AG04450 (cell line): ENCODE measurements at regions of chr16 and their contacts with region 1.

Region 1: DNA sequence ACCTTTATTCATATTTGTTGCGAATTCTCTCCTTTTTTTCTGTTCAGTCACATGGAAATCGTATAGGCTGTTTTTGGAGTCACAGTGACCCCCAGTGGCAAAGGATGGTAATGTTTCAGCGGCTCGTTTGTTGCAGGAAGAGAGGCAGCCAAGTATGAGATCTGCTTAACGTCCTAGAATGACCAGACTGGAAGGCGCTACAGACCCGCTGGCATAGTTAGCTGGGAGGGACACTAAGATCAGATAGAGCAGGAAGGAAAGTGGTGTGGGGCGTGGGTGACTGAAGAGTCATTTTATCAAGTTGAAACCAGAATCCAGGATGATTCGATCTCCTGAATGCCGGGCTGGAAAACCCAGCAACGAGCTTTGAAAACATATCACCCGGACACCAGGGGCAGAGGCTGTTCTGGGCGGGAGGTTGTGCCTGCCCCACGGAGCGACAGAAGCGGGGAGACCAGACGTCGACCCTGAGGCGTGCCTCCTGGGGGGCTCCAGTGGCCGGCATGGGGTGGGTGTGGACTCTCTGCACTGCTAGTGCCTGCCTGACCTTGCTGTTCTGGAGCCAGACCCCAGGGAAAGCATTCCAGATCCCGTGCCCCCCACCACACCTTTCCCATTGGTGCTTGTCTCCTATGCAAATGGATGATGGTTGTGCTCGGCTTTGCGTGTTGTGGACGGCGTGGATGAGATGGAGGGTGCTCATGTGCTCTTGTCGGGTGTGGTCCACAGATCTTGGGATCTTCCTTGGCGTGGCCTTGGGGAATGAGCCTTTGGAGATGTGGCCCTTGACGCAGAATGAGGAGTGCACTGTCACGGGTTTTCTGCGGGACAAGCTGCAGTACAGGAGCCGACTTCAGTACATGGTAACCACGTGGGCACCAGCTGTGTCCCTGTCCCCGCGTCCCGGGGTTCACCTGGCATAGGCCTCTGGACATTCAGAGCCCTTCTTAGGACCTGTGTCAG is 7.7 kb downstream of the IL34 start:
- DNase-seq: peak; percentile 54
- H3K4me3 ChIP-seq: peak overlapping the region; percentile 41
- H3K27ac ChIP-seq: no peak overlapping the region
- H3K27me3 ChIP-seq: no peaks in the 10 kb centered on the region
- CTCF ChIP-seq: peak; percentile 93

Region 2: DNA sequence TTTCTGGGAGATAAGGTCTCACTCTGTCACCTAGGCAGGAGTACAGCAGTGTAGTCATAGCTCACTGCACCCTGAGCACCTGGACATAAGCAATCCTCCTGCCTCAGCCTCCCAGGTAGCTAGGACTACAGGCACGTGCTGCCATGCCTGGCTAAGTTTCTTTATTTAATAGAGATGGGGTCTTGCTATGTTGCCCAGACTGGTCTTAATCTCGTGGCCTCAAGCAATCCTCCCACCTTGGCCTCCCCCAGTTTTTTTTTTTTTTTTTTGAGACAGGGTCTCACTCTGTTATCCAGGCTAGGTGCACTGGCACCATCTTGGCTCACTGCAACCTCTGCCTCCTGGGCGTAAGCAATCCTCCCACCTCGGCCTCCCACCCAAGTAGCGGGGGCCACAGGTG is 334.0 kb before region 1 on chr16:
- CTCF ChIA-PET with region 1: no interaction called
- POLR2A ChIA-PET with region 1: no interaction called
- DNase-seq: no peak
- H3K4me3 ChIP-seq: no peak overlapping the region
- H3K27ac ChIP-seq: no peak overlapping the region
- H3K27me3 ChIP-seq: no peaks in the 10 kb centered on the region
- CTCF ChIP-seq: no peak

Region 3: DNA sequence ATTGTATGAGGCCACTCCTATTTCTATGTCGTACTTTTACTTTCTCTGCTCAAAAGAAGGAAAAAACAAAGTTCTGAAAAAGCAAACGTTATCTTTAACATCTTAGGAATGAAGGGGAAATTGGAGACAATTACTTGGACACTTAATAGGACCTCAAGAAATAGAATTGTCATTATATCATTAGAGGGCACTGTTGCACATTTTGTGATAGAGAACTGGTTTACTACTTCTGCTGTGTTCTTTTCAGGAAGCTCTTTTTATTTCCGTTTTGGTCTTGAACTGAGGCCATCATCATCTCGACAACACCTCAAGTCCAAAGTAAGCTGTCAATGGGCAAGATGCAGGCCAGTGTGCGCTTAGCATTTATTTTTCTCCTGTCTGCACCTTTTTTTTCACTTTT is 145.3 kb before region 1 on chr16:
- CTCF ChIA-PET with region 1: interaction called, 10 read pairs
- POLR2A ChIA-PET with region 1: no interaction called
- DNase-seq: no peak
- H3K4me3 ChIP-seq: no peak overlapping the region
- H3K27ac ChIP-seq: no peak overlapping the region
- H3K27me3 ChIP-seq: no peaks in the 10 kb centered on the region
- CTCF ChIP-seq: no peak

Region 4: GRCh38 chr16:70534971-70535370 is 119.1 kb before region 1 on chr16:
- CTCF ChIA-PET with region 1: interaction called, 48 read pairs
- POLR2A ChIA-PET with region 1: no interaction called
- DNase-seq: no peak
- H3K4me3 ChIP-seq: no peak overlapping the region
- H3K27ac ChIP-seq: no peak overlapping the region
- H3K27me3 ChIP-seq: no peaks in the 10 kb centered on the region
- CTCF ChIP-seq: no peak

Region 5: GRCh38 chr16:70553645-70554044 is 100.4 kb before region 1 on chr16:
- CTCF ChIA-PET with region 1: interaction called, 15 read pairs
- POLR2A ChIA-PET with region 1: no interaction called
- DNase-seq: peak; percentile 85
- H3K4me3 ChIP-seq: no peak overlapping the region
- H3K27ac ChIP-seq: peak overlapping the region; percentile 94
- H3K27me3 ChIP-seq: no peaks in the 10 kb centered on the region
- CTCF ChIP-seq: no peak

Region 6: DNA sequence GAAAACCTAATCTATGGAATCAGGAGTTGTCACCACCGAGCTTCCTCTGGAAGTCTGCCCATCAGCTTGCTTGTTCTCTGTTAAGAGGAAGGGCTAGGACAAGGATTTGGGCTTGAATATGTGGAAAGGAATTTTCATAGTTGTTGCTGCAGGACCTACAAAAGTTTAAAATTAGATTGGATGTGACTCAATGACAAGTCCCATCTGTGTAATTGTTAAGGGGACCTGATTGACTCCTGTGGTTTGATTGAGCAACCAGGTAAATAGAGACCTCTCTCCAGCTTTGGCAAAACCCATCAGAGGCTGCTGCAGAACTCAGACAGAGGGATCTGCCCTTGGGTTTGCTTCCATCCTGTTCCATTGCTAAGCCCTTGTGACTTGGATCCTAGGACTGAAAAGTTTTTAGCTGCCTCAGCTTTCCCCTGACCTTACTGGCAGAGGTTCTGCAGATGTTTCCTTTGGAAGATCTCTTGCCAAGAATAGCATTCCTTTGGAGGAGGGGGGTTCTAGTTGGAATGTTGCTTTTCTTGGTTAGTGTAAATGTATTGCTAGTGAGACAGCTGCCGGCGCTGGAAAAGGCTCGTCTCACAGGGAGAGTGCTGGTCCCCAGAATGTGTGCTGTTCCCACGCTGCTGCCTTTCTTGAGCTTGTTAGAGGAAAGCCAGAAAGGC is 80.5 kb before region 1 on chr16:
- CTCF ChIA-PET with region 1: interaction called, 12 read pairs
- POLR2A ChIA-PET with region 1: interaction called, 9 read pairs
- DNase-seq: peak; percentile 94
- H3K4me3 ChIP-seq: no peak overlapping the region
- H3K27ac ChIP-seq: peak overlapping the region; percentile 89
- H3K27me3 ChIP-seq: no peaks in the 10 kb centered on the region
- CTCF ChIP-seq: no peak